ENCODE measurements at regions of chr2 and their contacts with region 1.

Region 1: GRCh38 chr2:70948337-70949003 is 12.8 kb downstream of the ATP6V1B1 start:
- DNase-seq: peak; percentile 77 to 79
- ATAC-seq: peak; percentile 94 to 98
- H3K4me3 ChIP-seq: peak overlapping the region; percentile 4
- H3K27ac ChIP-seq: peak overlapping the region; percentile 12 to 76; a peak in 5 of 6 replicates
- H3K4me1 ChIP-seq: peaks cover 13% of the 10 kb centered on the region; the same call in 2 of the 3 replicates
- CTCF ChIP-seq: peak; percentile 86
- EP300 ChIP-seq: no peak
- POLR2A ChIP-seq: peak; percentile 4; the same call in 1 of the 2 replicates
- RAD21 ChIP-seq: peak; percentile 56 to 57

Region 2: DNA sequence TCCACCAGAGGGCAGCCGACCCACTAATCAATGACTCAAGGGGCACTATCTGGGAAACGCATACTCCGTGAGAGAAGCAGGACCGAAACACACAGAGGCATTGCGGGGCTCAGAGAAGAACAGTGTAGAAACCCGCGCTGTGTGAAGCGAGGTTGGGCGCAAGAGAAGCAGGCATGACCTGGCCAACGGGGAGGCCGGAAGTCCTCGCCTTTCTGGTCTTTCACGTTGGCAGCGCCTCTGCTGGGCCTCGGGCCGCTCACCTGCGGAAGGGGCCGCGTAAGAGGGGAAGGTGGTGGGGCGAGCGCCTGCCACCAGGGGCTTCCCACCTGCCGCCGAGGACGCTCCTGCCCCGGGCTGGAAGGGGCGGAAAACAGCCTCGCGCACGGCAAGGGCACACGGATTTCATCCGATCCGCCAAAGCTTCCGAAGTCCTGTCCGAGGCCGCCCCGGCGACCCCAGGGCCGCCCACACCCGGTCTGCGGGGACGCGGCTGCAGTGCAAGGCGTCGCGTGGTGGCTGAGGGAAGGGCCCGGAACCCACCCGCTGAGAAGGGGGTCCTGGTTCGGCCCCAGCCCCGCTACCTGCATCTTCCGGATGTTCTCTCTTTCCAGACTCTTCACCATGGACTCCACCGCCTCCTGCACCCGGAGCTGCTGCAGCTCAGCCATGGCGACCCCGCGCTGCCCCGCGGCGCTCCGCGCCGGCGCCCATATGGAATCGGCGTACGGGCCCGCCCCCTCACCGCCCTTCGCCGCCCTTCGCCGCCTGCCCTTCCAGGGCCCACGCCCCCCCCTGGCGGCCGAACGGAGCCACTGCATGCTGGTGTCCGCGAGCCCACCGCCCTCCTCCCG is 646.9 kb before region 1 on chr2 and contains the start of gene FAM136A:
- CTCF ChIA-PET with region 1: interaction called, 19 read pairs
- POLR2A ChIA-PET with region 1: no interaction called
- DNase-seq: peak; percentile 78 to 89
- ATAC-seq: peak; percentile 86 to 94
- H3K4me3 ChIP-seq: peak within 1 kb of the TSS; percentile 95
- H3K27ac ChIP-seq: peak within 1 kb of the TSS; percentile 95 to 96
- H3K4me1 ChIP-seq: peaks cover 6% of the 10 kb centered on the region
- CTCF ChIP-seq: peak; percentile 75
- EP300 ChIP-seq: no peak
- POLR2A ChIP-seq: peak; percentile 96
- RAD21 ChIP-seq: peak; percentile 47 to 55; a peak in 4 of 5 replicates
- polyA plus RNA-seq, gene FAM136A: 88.5 and 117 TPM in 2 replicates

Region 3: GRCh38 chr2:70789304-70790135 is 158.9 kb before region 1 on chr2:
- CTCF ChIA-PET with region 1: interaction called, 48 read pairs
- POLR2A ChIA-PET with region 1: no interaction called
- DNase-seq: peak; percentile 78 to 85
- ATAC-seq: peak; percentile 86 to 96
- H3K4me3 ChIP-seq: peak overlapping the region; percentile 45
- H3K27ac ChIP-seq: 0 out of 6 replicates have a peak overlapping the region, but pooled peaks of 1 of the 2 experiments have one; percentile 11
- H3K4me1 ChIP-seq: peaks cover 7% of the 10 kb centered on the region; the same call in 1 of the 3 replicates
- CTCF ChIP-seq: peak; percentile 98
- EP300 ChIP-seq: no peak
- POLR2A ChIP-seq: no peak
- RAD21 ChIP-seq: peak; percentile 90 to 94

Region 4: GRCh38 chr2:70851704-70852103 is 96.8 kb before region 1 on chr2:
- CTCF ChIA-PET with region 1: interaction called, 27 read pairs
- POLR2A ChIA-PET with region 1: no interaction called
- DNase-seq: no peak
- ATAC-seq: no peak
- H3K4me3 ChIP-seq: no peak overlapping the region
- H3K27ac ChIP-seq: no peak overlapping the region
- H3K4me1 ChIP-seq: no peaks in the 10 kb centered on the region
- CTCF ChIP-seq: no peak
- EP300 ChIP-seq: no peak
- POLR2A ChIP-seq: no peak
- RAD21 ChIP-seq: no peak

Region 5: DNA sequence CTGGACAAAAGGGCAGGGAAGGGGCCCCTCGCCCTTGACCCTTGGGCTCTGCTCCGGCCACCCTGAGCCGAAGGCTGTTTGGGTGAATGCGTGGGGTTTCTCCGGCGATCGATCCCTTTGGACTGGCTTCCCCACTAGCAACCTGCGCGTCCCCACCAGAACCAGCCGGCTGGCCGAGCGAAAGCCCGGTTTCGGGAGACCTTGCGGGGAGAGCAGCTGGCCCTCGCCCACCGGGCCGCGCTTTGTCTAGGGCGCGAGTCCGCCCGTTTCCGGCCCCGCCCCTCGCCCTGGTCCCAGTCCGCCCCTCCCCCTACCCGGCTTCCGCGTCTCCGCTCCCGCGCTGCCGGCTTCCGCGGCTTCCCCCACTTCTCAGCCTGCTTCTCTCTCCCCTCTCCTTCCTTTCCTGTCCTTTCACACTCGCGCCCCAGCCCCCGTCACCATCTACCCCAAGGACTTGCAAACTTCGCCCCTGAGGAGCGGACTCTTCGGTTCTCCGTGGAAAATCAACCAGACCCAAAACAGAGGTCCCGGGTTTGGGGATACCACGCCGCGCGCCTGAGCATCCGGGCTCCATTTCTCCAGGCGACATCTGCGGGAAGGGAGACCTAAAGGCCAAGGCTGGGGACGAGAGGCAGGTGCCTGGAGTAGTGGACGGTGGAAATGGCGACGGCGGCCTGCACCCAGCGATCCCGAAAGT is 60.8 kb before region 1 on chr2:
- CTCF ChIA-PET with region 1: interaction called, 15 read pairs
- POLR2A ChIA-PET with region 1: no interaction called
- DNase-seq: peak; percentile 36 to 74
- ATAC-seq: peak; percentile 75 to 85
- H3K4me3 ChIP-seq: peak overlapping the region; percentile 61
- H3K27ac ChIP-seq: peak overlapping the region; percentile 78 to 92
- H3K4me1 ChIP-seq: peaks cover 11% of the 10 kb centered on the region; the same call in 2 of the 3 replicates
- CTCF ChIP-seq: no peak
- EP300 ChIP-seq: no peak
- POLR2A ChIP-seq: peak; percentile 78
- RAD21 ChIP-seq: no peak

Region 6: GRCh38 chr2:70977605-70978205 is 29.2 kb after region 1 on chr2:
- CTCF ChIA-PET with region 1: interaction called, 29 read pairs
- POLR2A ChIA-PET with region 1: no interaction called
- DNase-seq: no peak
- ATAC-seq: no peak
- H3K4me3 ChIP-seq: peak overlapping the region; percentile 55; the same call in 1 of the 3 replicates
- H3K27ac ChIP-seq: no peak overlapping the region
- H3K4me1 ChIP-seq: peaks cover 8% of the 10 kb centered on the region; the same call in 1 of the 3 replicates
- CTCF ChIP-seq: no peak; the same call in 1 of the 3 replicates
- EP300 ChIP-seq: no peak
- POLR2A ChIP-seq: no peak
- RAD21 ChIP-seq: no peak